Activated B cell treated with CpG ODN at 0.5 μM for 24 hours (primary cell): ENCODE measurements at regions of chr2 and their contacts with region 1.

Region 1: GRCh38 chr2:17719562-17720371 is 33.8 kb downstream of the SMC6 start:
- DNase-seq: no peak
- ATAC-seq: peak; percentile 70
- H3K4me3 Mint-ChIP-seq: no peak overlapping the region
- H3K27ac Mint-ChIP-seq: peak overlapping the region; percentile 78
- H3K4me1 Mint-ChIP-seq: peaks cover 3% of the 10 kb centered on the region
- H3K27me3 Mint-ChIP-seq: no peaks in the 10 kb centered on the region
- CTCF ChIP-seq: peak; percentile 44

Region 2: DNA sequence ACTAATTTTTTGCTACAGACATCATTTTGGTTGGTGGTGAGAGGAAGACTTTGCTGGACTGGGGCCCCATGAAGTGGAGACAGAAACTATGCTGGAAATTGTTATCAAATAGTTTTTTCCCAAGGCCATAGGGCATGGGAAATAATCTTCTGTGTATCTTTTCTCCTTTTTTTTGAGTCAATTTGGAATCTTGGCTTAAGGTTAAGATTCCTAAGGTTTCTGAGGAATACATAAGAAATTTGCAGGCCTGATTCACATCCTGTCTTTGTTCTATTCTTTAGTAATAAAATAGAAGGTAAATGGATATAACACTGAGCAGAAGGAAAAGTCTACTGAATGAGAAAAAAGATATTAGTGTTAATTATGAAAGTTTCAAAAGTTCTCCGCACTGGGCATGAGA is 17.2 kb after region 1 on chr2:
- CTCF ChIA-PET with region 1: interaction called, 11 read pairs
- POLR2A ChIA-PET with region 1: no interaction called
- intact Hi-C with region 1: loop called (anchors 1 kb)
- DNase-seq: no peak
- ATAC-seq: no peak
- H3K4me3 Mint-ChIP-seq: no peak overlapping the region
- H3K27ac Mint-ChIP-seq: peak overlapping the region; percentile 24
- H3K4me1 Mint-ChIP-seq: peaks cover 10% of the 10 kb centered on the region
- H3K27me3 Mint-ChIP-seq: no peaks in the 10 kb centered on the region
- CTCF ChIP-seq: no peak

Region 3: GRCh38 chr2:17918789-17919188 is 199.0 kb after region 1 on chr2:
- CTCF ChIA-PET with region 1: interaction called, 4 read pairs
- POLR2A ChIA-PET with region 1: no interaction called
- intact Hi-C with region 1: loop called (anchors 2 kb)
- DNase-seq: no peak
- ATAC-seq: no peak
- H3K4me3 Mint-ChIP-seq: no peak overlapping the region
- H3K27ac Mint-ChIP-seq: no peak overlapping the region
- H3K4me1 Mint-ChIP-seq: peaks cover 2% of the 10 kb centered on the region
- H3K27me3 Mint-ChIP-seq: peaks cover 2% of the 10 kb centered on the region
- CTCF ChIP-seq: no peak

Region 4: DNA sequence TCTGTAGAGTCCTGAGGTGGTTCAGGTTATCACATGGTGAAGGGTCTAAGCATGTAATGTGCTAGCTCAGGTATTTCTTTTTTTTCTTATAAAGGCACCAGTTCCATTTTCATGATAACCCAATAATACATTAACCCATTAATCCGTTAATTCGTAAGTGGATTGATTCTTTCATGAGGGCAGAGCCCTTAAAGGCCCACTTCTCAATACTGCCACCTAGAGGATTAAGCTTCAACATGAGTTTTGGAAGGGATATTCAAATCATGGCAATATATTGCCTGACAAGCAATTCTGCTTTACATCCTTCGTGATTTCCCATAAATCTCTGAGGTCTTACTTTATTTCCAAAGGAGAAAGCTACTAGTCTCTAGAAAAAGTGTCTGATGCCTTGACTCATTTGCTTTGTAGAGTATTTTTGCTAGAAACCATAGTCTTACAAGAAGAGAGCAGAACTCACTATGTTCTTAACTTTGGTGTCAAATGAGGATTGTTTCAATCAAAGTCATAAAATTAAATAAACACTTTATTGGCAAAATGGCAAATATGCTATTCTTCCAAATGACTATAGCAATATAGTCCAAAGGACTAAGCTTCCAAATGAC is 430.0 kb after region 1 on chr2:
- CTCF ChIA-PET with region 1: interaction called, 13 read pairs
- POLR2A ChIA-PET with region 1: no interaction called
- intact Hi-C with region 1: loop called (anchors 1 kb)
- DNase-seq: no peak
- ATAC-seq: no peak
- H3K4me3 Mint-ChIP-seq: no peak overlapping the region
- H3K27ac Mint-ChIP-seq: no peak overlapping the region
- H3K4me1 Mint-ChIP-seq: no peaks in the 10 kb centered on the region
- H3K27me3 Mint-ChIP-seq: peaks cover 18% of the 10 kb centered on the region
- CTCF ChIP-seq: no peak